PC-9 (cell line): ENCODE measurements at regions of chr20 and their contacts with region 1.

Region 1: DNA sequence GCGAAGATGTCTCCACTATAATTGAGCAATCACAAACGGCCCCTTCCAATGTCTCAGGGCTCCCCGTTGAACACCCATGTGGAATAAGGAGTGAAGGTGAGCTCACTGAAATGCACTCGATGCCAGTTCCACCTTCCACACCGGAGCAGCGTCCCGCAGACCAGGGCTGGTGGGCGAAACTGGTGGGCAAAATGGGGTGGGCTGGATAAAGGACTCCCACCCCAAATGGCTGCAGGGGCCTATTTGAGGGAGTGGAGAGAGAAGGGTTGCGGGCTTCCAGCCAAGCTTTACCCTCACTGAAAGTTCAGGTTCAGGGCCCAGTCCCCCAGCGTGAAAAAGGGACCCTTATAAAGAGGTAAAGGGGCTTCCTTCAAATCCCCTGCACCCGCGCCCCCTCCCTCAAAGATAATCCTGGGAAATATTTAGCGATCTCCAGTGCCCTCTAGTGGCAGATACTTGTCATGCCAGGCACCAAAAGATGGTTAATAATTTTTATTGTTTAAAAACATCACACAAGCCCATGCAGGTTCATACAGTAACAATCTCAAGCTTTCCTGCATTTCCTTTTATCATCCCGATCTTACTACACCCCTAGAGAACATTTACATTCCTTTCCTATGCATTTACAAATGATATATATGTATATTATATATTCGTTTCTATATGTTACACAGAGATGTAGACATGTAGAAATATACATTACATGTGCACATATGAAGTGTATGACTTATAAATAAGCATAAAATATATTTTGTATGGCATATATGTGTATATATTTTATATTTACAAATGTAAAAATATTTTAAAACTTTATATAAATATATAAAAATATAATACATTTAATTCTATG is 58.2 kb upstream of the NKX2-2 start:
- DNase-seq: no peak
- H3K4me3 ChIP-seq: no peak overlapping the region
- H3K27ac ChIP-seq: no peak overlapping the region
- H3K4me1 ChIP-seq: no peaks in the 10 kb centered on the region
- H3K27me3 ChIP-seq: peaks cover 45% of the 10 kb centered on the region
- CTCF ChIP-seq: peak; percentile 97

Region 2: DNA sequence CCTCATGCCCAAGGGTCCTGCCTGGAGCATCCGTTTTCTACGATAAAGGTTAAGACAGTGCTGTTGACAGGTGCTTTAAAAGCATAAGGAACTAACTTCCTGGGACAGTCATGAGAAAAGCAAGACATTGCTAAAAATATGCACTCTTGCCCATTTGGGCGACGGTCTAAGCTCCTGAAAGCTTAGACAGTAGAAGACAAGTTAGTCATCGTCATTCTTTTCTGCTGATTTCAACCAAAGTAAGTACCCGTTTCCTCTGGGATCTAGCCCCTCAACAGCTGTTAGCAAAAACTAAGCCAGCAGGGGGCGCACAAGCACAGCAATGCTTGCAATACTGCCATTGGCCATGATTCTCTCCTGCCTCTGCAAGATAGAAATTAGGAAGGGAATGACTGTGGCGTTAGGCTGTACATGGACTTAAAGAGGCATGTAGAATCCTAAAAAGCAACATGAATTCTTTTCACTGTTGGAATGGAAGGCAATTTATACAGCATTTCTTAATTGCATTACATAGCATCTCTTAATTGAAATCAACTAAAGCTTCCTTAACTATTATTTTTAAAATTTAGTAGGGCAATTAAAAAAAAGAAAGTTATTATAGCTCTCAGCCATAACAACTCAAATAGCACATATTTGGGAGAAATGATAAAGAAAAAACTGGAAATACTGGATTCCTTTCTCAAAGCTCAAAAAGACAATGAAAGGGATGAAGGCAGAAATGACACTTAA is 711.8 kb before region 1 on chr20:
- CTCF ChIA-PET with region 1: no interaction called
- POLR2A ChIA-PET with region 1: no interaction called
- intact Hi-C with region 1: loop called (anchors 5 kb)
- DNase-seq: peak; percentile 62 to 71
- H3K4me3 ChIP-seq: no peak overlapping the region
- H3K27ac ChIP-seq: no peak overlapping the region
- H3K4me1 ChIP-seq: no peaks in the 10 kb centered on the region
- H3K27me3 ChIP-seq: peaks cover 9% of the 10 kb centered on the region
- CTCF ChIP-seq: peak; percentile 89

Region 3: DNA sequence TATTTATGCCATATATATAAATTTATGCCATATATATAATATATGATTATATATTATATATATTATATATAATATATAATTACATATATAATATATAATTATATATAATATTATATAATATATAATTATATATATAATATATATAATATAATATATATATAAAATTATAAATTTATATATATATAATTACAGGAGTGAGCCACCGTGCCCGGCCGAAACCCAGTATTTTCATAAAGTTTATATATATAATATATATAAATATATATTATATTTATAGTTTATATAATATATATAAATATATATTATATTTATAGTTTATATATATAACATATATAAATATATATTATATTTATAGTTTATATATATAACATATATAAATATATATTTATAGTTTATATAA is 206.3 kb before region 1 on chr20:
- CTCF ChIA-PET with region 1: no interaction called
- POLR2A ChIA-PET with region 1: interaction called, 28 read pairs
- intact Hi-C with region 1: no loop called
- DNase-seq: no peak
- H3K4me3 ChIP-seq: no peak overlapping the region
- H3K27ac ChIP-seq: no peak overlapping the region
- H3K4me1 ChIP-seq: no peaks in the 10 kb centered on the region
- H3K27me3 ChIP-seq: no peaks in the 10 kb centered on the region
- CTCF ChIP-seq: no peak

Region 4: GRCh38 chr20:21529863-21530262 is 42.2 kb before region 1 on chr20:
- CTCF ChIA-PET with region 1: no interaction called
- POLR2A ChIA-PET with region 1: no interaction called
- intact Hi-C with region 1: no loop called
- DNase-seq: no peak
- H3K4me3 ChIP-seq: no peak overlapping the region
- H3K27ac ChIP-seq: no peak overlapping the region
- H3K4me1 ChIP-seq: no peaks in the 10 kb centered on the region
- H3K27me3 ChIP-seq: peaks cover 30% of the 10 kb centered on the region
- CTCF ChIP-seq: no peak; the same call in 1 of the 2 replicates